Activated B cell treated with CpG ODN at 0.5 μM for 24 hours (primary cell): ENCODE measurements at regions of chr14 and their contacts with region 1.

Region 1: DNA sequence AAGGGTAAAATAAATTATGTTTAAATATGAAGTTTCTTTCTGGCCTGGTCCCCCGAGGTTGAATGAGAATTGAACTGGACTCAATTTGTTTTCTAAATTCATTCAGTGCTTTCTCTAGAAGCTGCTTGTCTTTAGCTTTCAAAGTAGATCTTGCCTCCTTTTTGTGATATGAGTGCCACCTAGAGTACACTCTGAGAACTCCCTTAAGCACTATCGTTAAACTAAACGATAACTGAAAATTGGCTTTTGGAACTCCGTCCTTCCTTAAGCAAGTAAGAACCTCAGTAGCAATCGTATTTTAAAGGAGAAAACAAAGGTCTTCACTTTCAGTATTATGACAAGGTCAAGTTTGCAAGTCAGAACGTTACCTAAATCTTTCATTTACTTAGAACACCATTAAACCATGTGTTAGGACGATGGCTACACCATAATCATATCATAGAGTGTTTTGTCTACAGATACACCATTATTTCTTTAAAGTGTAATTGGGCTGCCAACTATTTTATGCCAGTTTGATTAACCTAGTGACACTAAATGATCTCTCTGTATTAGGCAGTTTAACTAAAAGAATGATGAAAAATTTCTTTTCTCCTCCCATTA is 364.8 kb downstream of the SNAPC1 start:
- DNase-seq: no peak
- ATAC-seq: peak; percentile 88
- H3K4me3 Mint-ChIP-seq: no peak overlapping the region
- H3K27ac Mint-ChIP-seq: peak overlapping the region; percentile 41
- H3K4me1 Mint-ChIP-seq: peaks cover 38% of the 10 kb centered on the region
- H3K27me3 Mint-ChIP-seq: peaks cover 2% of the 10 kb centered on the region
- CTCF ChIP-seq: peak; percentile 91

Region 2: GRCh38 chr14:61296719-61297502 is 830.1 kb before region 1 on chr14:
- CTCF ChIA-PET with region 1: no interaction called
- POLR2A ChIA-PET with region 1: no interaction called
- intact Hi-C with region 1: loop called (anchors 1 kb)
- DNase-seq: no peak
- ATAC-seq: no peak
- H3K4me3 Mint-ChIP-seq: no peak overlapping the region
- H3K27ac Mint-ChIP-seq: no peak overlapping the region
- H3K4me1 Mint-ChIP-seq: no peaks in the 10 kb centered on the region
- H3K27me3 Mint-ChIP-seq: no peaks in the 10 kb centered on the region
- CTCF ChIP-seq: no peak

Region 3: DNA sequence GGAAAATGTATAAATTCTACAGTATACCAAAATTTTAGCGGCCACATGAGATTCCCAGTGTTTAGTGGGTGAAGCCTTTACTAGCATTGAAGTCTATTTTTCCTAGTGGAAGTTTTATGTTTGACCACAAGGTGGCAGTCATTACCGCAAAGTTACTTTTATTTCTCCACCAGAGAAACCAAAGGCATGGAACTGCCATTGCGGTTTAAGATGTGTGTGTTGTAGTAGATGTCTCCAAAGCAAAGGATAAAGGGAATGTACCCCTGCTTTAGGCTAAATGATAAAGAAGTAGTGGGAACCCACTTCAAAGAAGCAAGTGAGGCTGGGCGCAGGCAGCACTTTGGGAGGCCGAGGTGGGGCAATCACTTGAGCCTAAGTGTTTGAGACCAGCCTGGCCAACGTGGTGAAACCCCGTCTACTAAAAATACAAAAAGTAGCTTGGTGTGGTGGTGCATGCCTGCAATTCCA is 665.1 kb before region 1 on chr14:
- CTCF ChIA-PET with region 1: interaction called, 7 read pairs
- POLR2A ChIA-PET with region 1: no interaction called
- intact Hi-C with region 1: loop called (anchors 1 kb)
- DNase-seq: no peak
- ATAC-seq: peak; percentile 68
- H3K4me3 Mint-ChIP-seq: no peak overlapping the region
- H3K27ac Mint-ChIP-seq: no peak overlapping the region
- H3K4me1 Mint-ChIP-seq: peaks cover 16% of the 10 kb centered on the region
- H3K27me3 Mint-ChIP-seq: no peaks in the 10 kb centered on the region
- CTCF ChIP-seq: no peak

Region 4: DNA sequence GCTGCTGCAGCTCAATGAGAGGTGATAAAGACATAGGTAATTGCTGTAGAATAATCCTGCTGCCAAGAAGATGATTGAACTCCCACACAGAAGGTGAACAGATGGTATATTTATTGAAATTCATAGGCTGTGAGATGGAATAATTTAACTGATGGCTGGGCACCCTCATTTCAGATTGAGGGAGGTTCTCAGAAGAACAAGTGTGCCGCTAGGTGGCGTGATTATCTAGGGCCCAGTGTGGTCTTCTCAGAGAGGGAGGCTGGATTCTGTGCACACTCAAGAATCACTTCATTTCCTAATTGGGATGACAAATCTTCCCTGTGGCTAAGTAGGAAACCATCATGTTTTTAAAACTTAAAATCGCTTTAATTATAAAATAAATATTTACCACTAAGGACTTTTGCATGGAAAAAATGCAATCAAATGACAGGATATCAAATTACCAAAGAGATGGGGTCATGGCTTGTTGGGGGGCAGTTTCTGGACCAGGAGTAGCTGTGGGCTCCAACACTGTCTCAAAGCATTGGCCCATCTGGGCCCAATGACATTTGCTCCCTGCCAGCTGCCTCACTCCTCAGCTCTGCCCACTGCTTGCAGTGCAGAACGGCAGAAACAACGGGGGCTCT is 232.4 kb before region 1 on chr14:
- CTCF ChIA-PET with region 1: interaction called, 78 read pairs
- POLR2A ChIA-PET with region 1: interaction called, 3 read pairs
- intact Hi-C with region 1: loop called (anchors 1 kb)
- DNase-seq: peak; percentile 30
- ATAC-seq: no peak
- H3K4me3 Mint-ChIP-seq: no peak overlapping the region
- H3K27ac Mint-ChIP-seq: no peak overlapping the region
- H3K4me1 Mint-ChIP-seq: peaks cover 30% of the 10 kb centered on the region
- H3K27me3 Mint-ChIP-seq: no peaks in the 10 kb centered on the region
- CTCF ChIP-seq: peak; percentile 57

Region 5: DNA sequence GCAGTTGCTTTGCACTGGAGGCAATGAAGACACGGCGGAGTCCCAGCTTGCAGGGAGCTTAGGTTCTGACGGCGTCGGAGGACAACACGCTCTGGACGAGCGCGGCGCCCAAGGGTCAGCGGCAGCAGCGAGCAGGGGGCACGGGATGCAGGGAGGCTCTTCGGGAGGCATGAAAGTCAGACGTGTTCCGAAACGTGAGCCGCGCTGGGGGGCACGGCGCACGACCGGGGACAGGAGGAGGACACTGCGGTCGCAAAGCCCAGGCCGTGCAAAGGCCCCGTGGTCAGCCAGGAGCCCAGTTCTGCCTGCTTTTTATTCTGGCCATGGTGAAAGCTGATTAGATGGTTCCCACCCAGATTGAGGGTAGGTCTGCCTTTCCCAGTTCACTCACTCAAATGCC is 70.2 kb before region 1 on chr14:
- CTCF ChIA-PET with region 1: no interaction called
- POLR2A ChIA-PET with region 1: no interaction called
- intact Hi-C with region 1: no loop called
- DNase-seq: no peak
- ATAC-seq: no peak
- H3K4me3 Mint-ChIP-seq: no peak overlapping the region
- H3K27ac Mint-ChIP-seq: no peak overlapping the region
- H3K4me1 Mint-ChIP-seq: peaks cover 10% of the 10 kb centered on the region
- H3K27me3 Mint-ChIP-seq: no peaks in the 10 kb centered on the region
- CTCF ChIP-seq: no peak

Region 6: DNA sequence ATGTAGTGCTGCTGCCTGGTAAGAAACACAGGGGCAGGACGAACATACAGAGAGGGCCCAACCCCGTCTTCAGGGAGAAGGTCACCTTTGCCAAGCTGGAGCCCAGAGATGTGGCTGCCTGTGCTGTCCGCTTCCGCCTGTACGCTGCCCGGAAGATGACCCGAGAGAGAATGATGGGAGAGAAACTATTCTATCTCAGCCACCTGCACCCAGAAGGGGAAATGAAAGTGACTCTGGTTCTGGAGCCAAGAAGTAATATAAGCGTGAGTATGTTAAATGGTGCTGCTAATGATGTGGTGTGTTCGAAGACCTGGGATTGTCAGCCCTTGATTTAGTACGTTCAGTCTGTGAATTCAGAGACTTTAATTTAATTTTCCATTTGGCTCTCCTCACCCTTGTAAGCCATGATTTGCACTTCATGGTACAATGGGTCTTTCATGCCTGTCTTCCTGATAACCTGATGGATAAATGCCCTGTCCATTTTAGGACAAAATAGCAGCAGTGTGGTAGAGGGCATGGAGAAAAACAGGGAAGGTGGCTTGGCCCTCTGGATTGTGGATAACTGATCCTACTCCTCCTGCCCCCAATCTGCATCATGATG is 45.9 kb before region 1 on chr14:
- CTCF ChIA-PET with region 1: interaction called, 11 read pairs
- POLR2A ChIA-PET with region 1: interaction called, 3 read pairs
- intact Hi-C with region 1: loop called (anchors 2 kb)
- DNase-seq: peak; percentile 44
- ATAC-seq: peak; percentile 69
- H3K4me3 Mint-ChIP-seq: peak overlapping the region; percentile 78
- H3K27ac Mint-ChIP-seq: peak overlapping the region; percentile 94
- H3K4me1 Mint-ChIP-seq: peaks cover 80% of the 10 kb centered on the region
- H3K27me3 Mint-ChIP-seq: no peaks in the 10 kb centered on the region
- CTCF ChIP-seq: no peak

Region 7: GRCh38 chr14:62179367-62180018 is 52.5 kb after region 1 on chr14:
- CTCF ChIA-PET with region 1: no interaction called
- POLR2A ChIA-PET with region 1: no interaction called
- intact Hi-C with region 1: no loop called
- DNase-seq: no peak
- ATAC-seq: no peak
- H3K4me3 Mint-ChIP-seq: no peak overlapping the region
- H3K27ac Mint-ChIP-seq: no peak overlapping the region
- H3K4me1 Mint-ChIP-seq: no peaks in the 10 kb centered on the region
- H3K27me3 Mint-ChIP-seq: peaks cover 25% of the 10 kb centered on the region
- CTCF ChIP-seq: no peak